Activated T-helper 2 cell treated with anti-CD3 and anti-CD28 coated beads, Interferon-gamma antibody, Interleukin-2, Interleukin-4, amounts not matched to agents 10 μg/mL and 5 μg/mL and 100 μg/mL, durations not matched to agents 14 hours and 24 hours and 36 hours (primary cell): ENCODE measurements at regions of chr7 and their contacts with region 1.

Region 1: DNA sequence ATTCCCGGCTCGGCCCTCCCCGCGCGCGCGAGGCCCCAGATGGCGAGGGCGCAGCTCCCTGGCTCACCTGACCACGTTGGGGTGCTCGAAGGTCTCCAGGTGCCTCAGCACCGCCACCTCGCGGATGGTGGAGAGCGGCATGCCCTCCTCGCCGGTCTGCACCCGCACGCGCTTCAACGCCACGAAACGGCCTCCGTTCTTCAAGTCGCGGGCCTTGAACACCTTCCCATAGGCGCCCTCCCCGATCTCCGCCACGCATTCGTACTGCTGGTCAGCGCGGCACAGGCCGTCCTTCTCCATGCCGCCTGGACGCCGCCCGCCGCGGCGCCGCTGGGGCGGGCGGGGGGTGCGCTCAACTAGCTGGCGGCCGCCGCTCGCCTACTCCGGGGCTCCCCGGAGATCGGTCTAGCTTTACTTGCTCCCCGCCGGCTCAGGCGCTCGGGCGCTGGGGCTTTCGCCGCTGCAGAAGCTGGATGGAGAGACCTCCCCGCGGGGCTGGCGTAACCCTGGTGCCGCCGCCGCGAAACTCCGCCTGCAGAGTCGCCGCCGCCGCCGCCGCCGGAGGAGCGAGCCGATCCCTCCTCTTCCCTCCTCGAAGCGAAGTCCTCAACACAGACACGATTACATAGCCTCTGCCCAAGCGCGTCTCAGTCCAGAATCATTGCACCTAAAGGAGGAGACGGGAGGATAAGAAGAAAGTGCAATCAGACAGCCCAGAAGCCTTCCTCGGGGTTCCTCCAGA is 3.2 kb downstream of the CDK6 start:
- DNase-seq: peak; percentile 87
- H3K4me3 Mint-ChIP-seq: peak overlapping the region; percentile 94
- H3K27ac Mint-ChIP-seq: peak overlapping the region; percentile 98
- H3K4me1 Mint-ChIP-seq: peaks cover 40% of the 10 kb centered on the region
- H3K27me3 Mint-ChIP-seq: no peaks in the 10 kb centered on the region

Region 2: GRCh38 chr7:92528188-92528957 is 304.8 kb before region 1 on chr7 and contains the starts of genes PEX1 and RBM48:
- intact Hi-C with region 1: loop called (anchors 5 kb)
- DNase-seq: peak; percentile 96
- H3K4me3 Mint-ChIP-seq: peak within 1 kb of the TSS; percentile 92
- H3K27ac Mint-ChIP-seq: peak within 1 kb of the TSS; percentile 95
- H3K4me1 Mint-ChIP-seq: peaks cover 20% of the 10 kb centered on the region
- H3K27me3 Mint-ChIP-seq: no peaks in the 10 kb centered on the region
- total RNA-seq, gene PEX1: 15.1 TPM in 2 replicates
- total RNA-seq, gene RBM48: 15.2 and 16.8 TPM in 2 replicates

Region 3: DNA sequence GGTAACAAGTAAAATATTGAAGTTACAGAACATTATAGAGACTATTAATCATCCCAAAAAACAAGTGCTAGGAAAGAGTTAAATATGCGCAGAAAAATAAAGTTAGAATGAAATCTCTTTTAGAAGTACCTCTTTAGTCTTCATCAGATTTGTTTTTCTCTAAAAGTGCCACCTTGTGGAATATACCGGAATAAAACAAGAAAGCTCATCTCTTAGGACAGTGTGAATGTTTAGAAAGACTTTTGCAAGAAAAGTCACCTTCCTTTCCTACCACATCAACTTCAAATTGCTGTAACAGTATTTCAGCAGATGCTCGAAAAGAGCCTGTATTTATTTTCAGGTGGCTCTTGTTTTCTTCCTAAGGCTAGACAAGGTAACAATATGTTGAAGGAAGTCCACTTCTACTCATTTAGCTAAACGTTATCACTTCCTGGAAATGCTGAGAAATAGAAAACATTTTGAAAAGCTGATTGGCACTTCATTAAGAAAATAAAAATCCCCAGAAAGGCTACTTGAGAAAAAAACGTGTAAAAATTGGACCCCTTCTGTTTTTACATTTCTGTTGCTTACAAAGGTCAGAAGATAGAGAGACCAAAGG is 223.2 kb before region 1 on chr7:
- intact Hi-C with region 1: no loop called
- DNase-seq: no peak
- H3K4me3 Mint-ChIP-seq: no peak overlapping the region
- H3K27ac Mint-ChIP-seq: peak overlapping the region; percentile 71
- H3K4me1 Mint-ChIP-seq: peaks cover 41% of the 10 kb centered on the region
- H3K27me3 Mint-ChIP-seq: no peaks in the 10 kb centered on the region

Region 4: DNA sequence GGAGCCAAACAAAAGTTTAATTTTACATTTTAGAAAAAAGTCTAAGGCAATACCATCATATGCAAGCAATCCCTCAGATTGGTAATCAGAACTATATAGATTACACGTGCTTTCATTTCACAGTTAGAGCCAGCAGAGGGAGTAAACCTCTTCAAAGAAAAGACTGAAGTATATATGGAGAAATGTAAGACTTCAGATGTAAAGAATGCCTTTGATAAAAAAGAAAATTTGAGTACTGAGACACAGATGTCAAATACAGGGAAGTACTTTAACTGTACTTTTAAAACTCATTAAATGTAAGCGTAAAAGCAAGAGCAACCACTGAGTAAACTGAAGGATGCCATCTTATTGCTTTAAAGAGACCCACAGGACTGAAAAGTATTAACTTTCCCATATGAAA is 141.6 kb before region 1 on chr7:
- intact Hi-C with region 1: loop called (anchors 1 kb)
- DNase-seq: no peak
- H3K4me3 Mint-ChIP-seq: no peak overlapping the region
- H3K27ac Mint-ChIP-seq: peak overlapping the region; percentile 64
- H3K4me1 Mint-ChIP-seq: peaks cover 56% of the 10 kb centered on the region
- H3K27me3 Mint-ChIP-seq: no peaks in the 10 kb centered on the region

Region 5: GRCh38 chr7:92768501-92769393 is 64.4 kb before region 1 on chr7:
- intact Hi-C with region 1: loop called (anchors 1 kb)
- DNase-seq: no peak
- H3K4me3 Mint-ChIP-seq: peak overlapping the region; percentile 11
- H3K27ac Mint-ChIP-seq: peak overlapping the region; percentile 83
- H3K4me1 Mint-ChIP-seq: peaks cover 64% of the 10 kb centered on the region
- H3K27me3 Mint-ChIP-seq: no peaks in the 10 kb centered on the region

Region 6: GRCh38 chr7:92854501-92855238 is 21.5 kb after region 1 on chr7:
- intact Hi-C with region 1: loop called (anchors 1 kb)
- DNase-seq: no peak
- H3K4me3 Mint-ChIP-seq: no peak overlapping the region
- H3K27ac Mint-ChIP-seq: peak overlapping the region; percentile 83
- H3K4me1 Mint-ChIP-seq: peaks cover 17% of the 10 kb centered on the region
- H3K27me3 Mint-ChIP-seq: no peaks in the 10 kb centered on the region

Region 7: DNA sequence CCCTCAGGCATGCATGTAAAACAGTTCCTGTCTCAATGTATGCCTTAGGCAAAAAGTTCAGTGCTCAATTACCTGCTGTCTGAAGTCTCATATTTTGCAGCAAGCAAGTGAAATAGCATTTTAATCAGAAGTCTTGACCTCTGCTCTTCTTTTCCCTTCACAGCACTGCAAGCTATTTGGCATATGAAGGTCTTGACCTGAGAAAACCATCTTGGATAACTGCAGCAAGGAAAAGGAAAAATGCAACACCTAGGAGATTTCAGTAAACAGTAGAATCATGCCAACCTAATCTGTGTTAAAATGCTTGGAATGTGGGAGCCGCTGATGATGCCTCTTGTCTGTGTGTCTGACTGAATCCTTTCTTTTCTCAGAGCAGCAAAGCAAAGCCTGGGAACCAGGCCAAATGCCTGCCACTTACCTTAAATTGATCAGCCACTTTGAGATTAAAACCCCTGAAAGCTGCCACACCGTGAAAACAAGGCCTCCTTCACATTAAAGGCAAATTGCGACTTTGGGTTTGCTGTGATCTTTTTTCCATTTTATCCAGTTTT is 83.6 kb after region 1 on chr7:
- intact Hi-C with region 1: no loop called
- DNase-seq: no peak
- H3K4me3 Mint-ChIP-seq: no peak overlapping the region
- H3K27ac Mint-ChIP-seq: no peak overlapping the region
- H3K4me1 Mint-ChIP-seq: no peaks in the 10 kb centered on the region
- H3K27me3 Mint-ChIP-seq: no peaks in the 10 kb centered on the region

Region 8: DNA sequence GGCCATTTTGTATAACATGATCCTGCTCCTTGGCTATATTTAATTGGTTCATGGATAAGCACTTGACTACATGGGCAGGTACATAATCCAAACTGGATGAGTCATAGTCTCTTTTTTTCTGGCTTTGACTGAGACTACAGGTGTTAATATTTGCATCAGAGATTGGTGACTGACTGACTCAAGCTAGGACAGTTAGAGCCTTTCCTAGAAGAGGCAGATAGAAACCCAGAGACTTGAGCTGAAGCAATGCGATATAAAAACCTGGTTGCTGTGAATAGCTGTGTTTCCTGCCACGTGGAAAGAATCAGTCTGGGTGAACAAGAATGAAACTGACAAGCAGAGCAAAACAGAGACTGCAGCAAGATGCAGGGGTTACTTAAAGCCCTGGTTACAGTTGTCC is 203.6 kb after region 1 on chr7:
- intact Hi-C with region 1: loop called (anchors 1 kb)
- DNase-seq: peak; percentile 33
- H3K4me3 Mint-ChIP-seq: no peak overlapping the region
- H3K27ac Mint-ChIP-seq: peak overlapping the region; percentile 39
- H3K4me1 Mint-ChIP-seq: peaks cover 16% of the 10 kb centered on the region
- H3K27me3 Mint-ChIP-seq: no peaks in the 10 kb centered on the region